Activated CD4-positive, alpha-beta T cell treated with anti-CD3 and anti-CD28 coated beads for 36 hours (primary cell): ENCODE measurements at regions of chr3 and their contacts with region 1.

Region 1: GRCh38 chr3:77254967-77255831 is 215.3 kb downstream of the ROBO2 start:
- DNase-seq: peak; percentile 32
- ATAC-seq: no peak
- H3K4me3 Mint-ChIP-seq: no peak overlapping the region
- H3K27ac Mint-ChIP-seq: no peak overlapping the region
- H3K4me1 Mint-ChIP-seq: no peaks in the 10 kb centered on the region
- H3K27me3 Mint-ChIP-seq: no peaks in the 10 kb centered on the region

Region 2: GRCh38 chr3:76078101-76078500 is 1177.1 kb before region 1 on chr3:
- CTCF ChIA-PET with region 1: no interaction called
- POLR2A ChIA-PET with region 1: no interaction called
- intact Hi-C with region 1: no loop called
- DNase-seq: no peak
- ATAC-seq: no peak
- H3K4me3 Mint-ChIP-seq: no peak overlapping the region
- H3K27ac Mint-ChIP-seq: no peak overlapping the region
- H3K4me1 Mint-ChIP-seq: no peaks in the 10 kb centered on the region
- H3K27me3 Mint-ChIP-seq: no peaks in the 10 kb centered on the region

Region 3: DNA sequence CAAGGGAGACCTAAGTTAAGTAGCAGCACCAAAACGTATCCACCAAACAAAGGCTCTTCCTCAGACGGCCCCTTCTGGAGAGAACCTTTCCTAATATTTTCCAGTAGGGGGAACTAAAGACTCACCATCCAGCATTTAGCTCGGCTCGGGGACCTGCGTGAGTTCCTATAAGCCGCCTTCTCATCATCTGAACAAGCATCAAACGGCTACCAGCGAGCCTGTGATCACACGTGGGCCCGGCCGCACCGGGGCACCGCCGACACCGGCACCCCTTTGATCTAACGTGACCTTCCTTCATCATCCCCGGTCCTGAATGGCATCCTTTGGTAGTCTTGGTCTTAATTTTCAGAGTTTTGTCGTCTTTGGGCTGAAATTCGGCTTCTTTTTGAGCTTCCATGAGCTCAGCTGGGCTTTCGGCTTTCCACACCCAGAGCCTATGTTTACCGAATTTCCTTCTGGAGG is 216.7 kb before region 1 on chr3:
- CTCF ChIA-PET with region 1: no interaction called
- POLR2A ChIA-PET with region 1: no interaction called
- intact Hi-C with region 1: loop called in 1 of 2 experiments (anchors 1 kb)
- DNase-seq: peak; percentile 36
- ATAC-seq: no peak
- H3K4me3 Mint-ChIP-seq: no peak overlapping the region
- H3K27ac Mint-ChIP-seq: no peak overlapping the region
- H3K4me1 Mint-ChIP-seq: peaks cover 2% of the 10 kb centered on the region
- H3K27me3 Mint-ChIP-seq: peaks cover 30% of the 10 kb centered on the region